ENCODE measurements at regions of chr10 and their contacts with region 1.

Region 1: GRCh38 chr10:96513698-96514561 is at the start of gene TLL2:
- DNase-seq: peak; percentile 85 to 90
- ATAC-seq: peak; percentile 92 to 97
- H3K4me3 ChIP-seq: peak within 1 kb of the TSS; percentile 56
- H3K27ac ChIP-seq: peak within 1 kb of the TSS; percentile 37 to 77; a peak in 4 of 6 replicates
- H3K4me1 ChIP-seq: peaks cover 6% of the 10 kb centered on the region; the same call in 2 of the 3 replicates
- CTCF ChIP-seq: peak; percentile 52
- EP300 ChIP-seq: no peak
- POLR2A ChIP-seq: peak; percentile 55
- RAD21 ChIP-seq: peak; percentile 5 to 39; a peak in 3 of 5 replicates
- polyA plus RNA-seq, gene TLL2: 0.08 TPM in 2 replicates

Region 2: DNA sequence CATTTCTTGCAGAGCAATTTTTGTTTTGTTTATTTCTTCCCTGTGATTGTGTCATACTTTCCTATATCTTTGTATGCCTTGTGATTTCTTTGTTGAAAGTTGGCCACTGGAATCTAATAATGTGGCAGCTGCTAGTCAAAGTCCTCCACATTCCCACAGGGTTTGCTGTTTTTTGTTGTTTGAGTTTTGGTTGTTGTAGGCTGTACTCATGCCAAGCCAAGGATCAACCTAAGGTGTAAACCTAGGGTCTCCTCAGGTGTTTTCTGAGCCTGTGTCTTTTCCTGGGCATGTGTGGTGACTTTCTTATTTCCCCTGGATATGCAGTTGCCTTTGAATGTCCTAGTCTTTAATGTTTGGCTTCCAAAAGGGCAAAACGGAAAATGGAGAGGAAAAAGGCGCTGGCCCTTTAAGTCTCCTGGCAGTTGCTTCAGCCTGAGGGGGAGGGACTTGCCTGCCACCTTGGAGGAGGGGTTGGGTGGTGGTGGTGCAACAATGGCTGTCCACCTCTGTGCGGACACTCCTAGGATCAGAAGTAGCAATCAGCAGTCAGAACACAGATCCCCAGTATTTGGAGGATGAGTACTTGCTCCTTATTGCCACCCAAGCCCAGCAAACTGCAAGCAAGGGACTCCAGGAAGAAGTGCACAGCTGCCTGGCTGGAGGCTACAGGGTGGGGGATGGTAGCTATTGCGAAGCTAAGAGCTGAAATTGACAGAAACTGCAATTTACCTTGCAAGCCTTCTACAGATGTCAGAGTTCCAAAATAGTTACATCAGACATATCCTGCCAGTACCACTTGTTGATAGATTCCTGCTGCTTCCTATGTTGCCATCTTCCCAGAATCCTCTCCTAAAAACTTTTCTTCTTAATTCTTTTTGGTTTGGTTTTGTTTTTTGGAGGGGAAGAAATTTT is 389.4 kb before region 1 on chr10:
- CTCF ChIA-PET with region 1: no interaction called
- POLR2A ChIA-PET with region 1: no interaction called
- DNase-seq: peak; percentile 66 to 80
- ATAC-seq: peak; percentile 97 to 98
- H3K4me3 ChIP-seq: peak overlapping the region; percentile 39
- H3K27ac ChIP-seq: peak overlapping the region; percentile 77 to 89
- H3K4me1 ChIP-seq: peaks cover 14% of the 10 kb centered on the region; the same call in 2 of the 3 replicates
- CTCF ChIP-seq: no peak
- EP300 ChIP-seq: no peak
- POLR2A ChIP-seq: peak; percentile 43
- RAD21 ChIP-seq: no peak

Region 3: DNA sequence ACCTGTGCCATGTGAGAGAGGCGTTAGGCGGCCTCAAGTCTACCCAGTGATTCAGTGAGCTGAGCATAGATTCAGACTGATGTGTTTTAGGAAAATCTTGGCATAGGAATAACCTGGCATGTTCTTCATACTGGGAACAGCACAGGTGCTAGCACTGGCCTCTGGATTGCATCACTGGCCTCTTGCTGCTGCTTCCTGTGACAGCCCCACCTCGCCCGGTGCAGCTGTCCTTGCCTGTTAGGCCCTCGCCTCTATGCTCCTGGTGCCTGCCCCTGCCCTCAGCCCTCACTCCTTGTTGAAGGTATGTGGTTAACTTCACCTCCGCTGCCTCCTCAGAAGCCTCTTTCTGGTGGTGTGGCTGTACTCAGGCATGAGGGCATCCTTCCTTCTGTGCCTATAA is 288.8 kb before region 1 on chr10:
- CTCF ChIA-PET with region 1: no interaction called
- POLR2A ChIA-PET with region 1: no interaction called
- DNase-seq: no peak
- ATAC-seq: no peak
- H3K4me3 ChIP-seq: no peak overlapping the region
- H3K27ac ChIP-seq: no peak overlapping the region
- H3K4me1 ChIP-seq: no peaks in the 10 kb centered on the region
- CTCF ChIP-seq: no peak
- EP300 ChIP-seq: no peak
- POLR2A ChIP-seq: no peak
- RAD21 ChIP-seq: no peak

Region 4: DNA sequence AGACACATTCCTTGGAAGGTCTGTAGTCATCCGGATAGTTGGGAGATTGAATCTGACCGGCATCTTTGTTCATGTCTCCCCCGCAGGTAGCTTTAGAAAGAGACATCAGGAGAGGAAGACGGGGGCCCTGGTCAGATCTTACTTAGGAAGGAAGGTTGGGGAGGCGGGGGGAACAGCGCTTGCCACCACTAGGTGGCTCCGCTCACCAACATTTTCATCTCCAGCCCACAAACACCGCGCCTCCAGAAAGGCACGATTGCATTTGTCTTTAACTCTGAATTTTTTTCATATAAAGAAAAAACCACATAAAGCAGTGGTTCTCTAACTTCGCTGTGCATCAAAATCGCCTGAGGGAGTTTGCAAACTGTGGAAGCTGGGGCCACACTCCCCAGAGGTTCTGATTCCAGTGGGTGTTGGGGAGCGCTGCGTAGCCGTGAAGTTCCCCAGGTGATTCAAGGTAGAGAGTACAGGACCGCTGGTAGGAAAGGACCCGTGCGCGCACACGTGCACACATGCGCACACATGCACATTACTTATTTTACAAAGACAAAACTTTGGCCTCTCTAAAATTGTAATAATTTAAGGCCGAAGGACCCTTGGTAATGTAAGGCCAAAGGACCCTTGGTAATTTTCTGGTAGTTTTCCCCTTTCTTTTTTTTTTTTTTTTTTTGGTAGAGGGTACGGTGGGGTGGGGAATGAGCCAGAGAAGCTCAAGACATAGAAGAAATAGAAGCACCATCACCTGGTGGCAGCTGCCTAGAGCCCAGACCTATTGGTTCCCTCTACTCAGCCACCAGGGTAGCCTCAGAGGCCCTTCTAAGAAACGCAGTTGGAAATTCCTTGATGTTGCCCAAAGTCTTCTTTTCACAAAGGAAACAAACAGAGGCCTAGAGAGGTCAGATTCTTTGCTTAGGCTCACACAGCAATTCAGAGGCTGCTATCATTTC is 117.7 kb before region 1 on chr10:
- CTCF ChIA-PET with region 1: interaction called, 62 read pairs
- POLR2A ChIA-PET with region 1: no interaction called
- DNase-seq: peak; percentile 73 to 91
- ATAC-seq: peak; percentile 91 to 96
- H3K4me3 ChIP-seq: no peak overlapping the region
- H3K27ac ChIP-seq: no peak overlapping the region
- H3K4me1 ChIP-seq: no peaks in the 10 kb centered on the region
- CTCF ChIP-seq: peak; percentile 83
- EP300 ChIP-seq: no peak
- POLR2A ChIP-seq: no peak
- RAD21 ChIP-seq: peak; percentile 89 to 90

Region 5: DNA sequence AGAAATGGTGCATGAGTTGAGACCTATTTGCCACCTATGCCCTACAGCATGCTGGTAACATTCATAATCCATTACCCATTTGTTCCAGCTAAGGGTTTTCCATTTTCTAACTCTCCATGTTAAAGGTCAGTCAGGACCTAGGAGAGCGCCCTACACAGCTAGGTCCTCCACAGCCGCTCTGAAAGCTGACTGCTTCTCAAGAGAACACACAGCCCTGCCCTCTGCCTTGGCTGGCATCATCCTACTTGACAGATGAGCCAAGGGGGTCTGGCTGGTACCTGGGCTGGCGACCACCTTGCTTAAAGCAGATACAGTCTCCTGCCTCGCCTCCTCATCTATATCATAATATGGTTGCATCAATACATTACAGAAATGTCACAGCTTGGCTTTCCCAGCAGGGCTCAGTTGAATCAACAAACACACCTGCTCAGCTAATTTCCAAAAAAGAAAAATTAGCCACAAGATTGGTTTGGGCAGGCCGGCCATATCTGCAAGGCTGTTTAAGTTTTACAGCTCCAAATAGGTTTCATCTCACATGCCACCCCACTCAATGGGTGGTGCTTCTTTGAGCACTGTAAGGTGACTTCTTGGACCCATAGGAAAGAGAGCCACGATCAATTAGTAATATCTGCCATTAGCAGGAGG is 17.5 kb before region 1 on chr10:
- CTCF ChIA-PET with region 1: interaction called, 54 read pairs
- POLR2A ChIA-PET with region 1: no interaction called
- DNase-seq: no peak
- ATAC-seq: peak in 1 of 2 experiments; percentile 59; a peak in 3 of 6 replicates
- H3K4me3 ChIP-seq: no peak overlapping the region
- H3K27ac ChIP-seq: no peak overlapping the region
- H3K4me1 ChIP-seq: no peaks in the 10 kb centered on the region
- CTCF ChIP-seq: no peak
- EP300 ChIP-seq: no peak
- POLR2A ChIP-seq: no peak
- RAD21 ChIP-seq: no peak

Region 6: GRCh38 chr10:96524741-96525140 is 10.8 kb after region 1 on chr10:
- CTCF ChIA-PET with region 1: interaction called, 13 read pairs
- POLR2A ChIA-PET with region 1: no interaction called
- DNase-seq: no peak
- ATAC-seq: no peak
- H3K4me3 ChIP-seq: no peak overlapping the region
- H3K27ac ChIP-seq: no peak overlapping the region
- H3K4me1 ChIP-seq: no peaks in the 10 kb centered on the region
- CTCF ChIP-seq: no peak
- EP300 ChIP-seq: no peak
- POLR2A ChIP-seq: no peak
- RAD21 ChIP-seq: no peak

Region 7: DNA sequence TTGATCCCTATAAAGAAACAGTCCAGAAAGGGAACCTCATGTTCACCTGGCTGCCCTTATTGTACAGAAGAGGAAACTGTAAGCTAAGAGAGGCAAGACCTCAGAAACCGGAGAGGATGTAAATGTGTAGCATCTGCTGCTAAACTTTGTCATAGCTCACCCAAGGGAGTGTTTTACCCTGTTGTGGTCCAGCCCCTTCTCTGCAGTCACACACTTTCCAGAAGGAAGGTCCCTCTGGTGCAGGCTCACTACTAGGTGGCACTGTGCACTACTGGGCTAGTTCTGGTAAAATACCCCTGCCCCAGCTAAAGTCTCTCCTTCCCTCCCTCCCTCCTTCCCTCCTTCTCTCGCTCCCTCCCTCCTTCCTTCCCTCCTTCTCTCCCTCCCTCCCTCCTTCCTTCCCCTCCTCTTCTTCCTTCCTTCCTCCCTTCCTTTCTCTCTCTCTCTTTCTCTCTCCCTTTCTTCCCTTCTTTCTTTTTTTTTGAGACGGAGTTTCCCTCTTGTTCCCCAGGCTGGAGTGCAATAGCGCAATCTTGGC is 275.7 kb after region 1 on chr10:
- CTCF ChIA-PET with region 1: no interaction called
- POLR2A ChIA-PET with region 1: no interaction called
- DNase-seq: no peak
- ATAC-seq: peak; percentile 46 to 50; a peak in 3 of 6 replicates
- H3K4me3 ChIP-seq: no peak overlapping the region
- H3K27ac ChIP-seq: no peak overlapping the region
- H3K4me1 ChIP-seq: no peaks in the 10 kb centered on the region
- CTCF ChIP-seq: no peak
- EP300 ChIP-seq: no peak
- POLR2A ChIP-seq: no peak
- RAD21 ChIP-seq: no peak

Measured in A549 (cell line).